ENCODE measurements at regions of chr15 and their contacts with region 1.

Region 1: GRCh38 chr15:54197995-54198394 is 219.8 kb downstream of the UNC13C start:
- DNase-seq: no peak
- ATAC-seq: no peak
- H3K4me3 ChIP-seq: no peak overlapping the region
- H3K27ac ChIP-seq: no peak overlapping the region
- H3K4me1 ChIP-seq: no peaks in the 10 kb centered on the region
- H3K27me3 ChIP-seq: no peaks in the 10 kb centered on the region
- CTCF ChIP-seq: no peak
- EP300 ChIP-seq: no peak
- POLR2A ChIP-seq: no peak
- RAD21 ChIP-seq: no peak

Region 2: GRCh38 chr15:54033869-54034458 is 164.0 kb before region 1 on chr15:
- CTCF ChIA-PET with region 1: no interaction called
- POLR2A ChIA-PET with region 1: no interaction called
- RAD21 ChIA-PET with region 1: no interaction called
- SMC1A ChIA-PET with region 1: no interaction called
- in situ Hi-C with region 1: no loop called
- intact Hi-C with region 1: no loop called
- DNase-seq: no peak
- ATAC-seq: peak; percentile 62
- H3K4me3 ChIP-seq: no peak overlapping the region
- H3K27ac ChIP-seq: no peak overlapping the region
- H3K4me1 ChIP-seq: no peaks in the 10 kb centered on the region
- H3K27me3 ChIP-seq: no peaks in the 10 kb centered on the region
- CTCF ChIP-seq: no peak
- EP300 ChIP-seq: no peak
- POLR2A ChIP-seq: no peak
- RAD21 ChIP-seq: no peak

Region 3: DNA sequence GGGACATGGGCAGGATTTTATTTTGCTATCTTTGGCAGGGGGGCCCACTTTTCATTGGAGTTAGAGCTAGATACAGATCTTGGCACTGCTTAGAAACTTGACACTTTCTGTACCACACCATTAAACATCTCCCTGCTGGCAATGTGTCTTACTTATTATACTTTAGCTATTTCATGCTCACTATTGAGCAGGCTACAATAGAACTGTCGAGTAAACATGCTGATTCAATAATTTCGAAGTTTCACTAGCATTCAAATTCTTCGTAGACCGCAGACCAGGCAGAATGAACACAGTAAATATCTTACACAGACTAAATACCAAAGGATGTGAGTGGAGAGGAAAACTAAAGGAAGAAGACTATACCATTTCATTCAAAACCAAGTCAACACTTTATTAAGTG is 39.0 kb before region 1 on chr15:
- CTCF ChIA-PET with region 1: no interaction called
- POLR2A ChIA-PET with region 1: no interaction called
- RAD21 ChIA-PET with region 1: no interaction called
- SMC1A ChIA-PET with region 1: interaction called, 13 read pairs
- in situ Hi-C with region 1: no loop called
- intact Hi-C with region 1: no loop called
- DNase-seq: no peak
- ATAC-seq: no peak
- H3K4me3 ChIP-seq: no peak overlapping the region
- H3K27ac ChIP-seq: no peak overlapping the region
- H3K4me1 ChIP-seq: no peaks in the 10 kb centered on the region
- H3K27me3 ChIP-seq: no peaks in the 10 kb centered on the region
- CTCF ChIP-seq: no peak
- EP300 ChIP-seq: no peak
- POLR2A ChIP-seq: no peak
- RAD21 ChIP-seq: no peak

Region 4: GRCh38 chr15:54187325-54187724 is 10.7 kb before region 1 on chr15:
- CTCF ChIA-PET with region 1: no interaction called
- POLR2A ChIA-PET with region 1: interaction called, 4 read pairs
- RAD21 ChIA-PET with region 1: no interaction called
- SMC1A ChIA-PET with region 1: interaction called, 10 read pairs
- in situ Hi-C with region 1: no loop called
- intact Hi-C with region 1: no loop called
- DNase-seq: no peak
- ATAC-seq: peak; percentile 75
- H3K4me3 ChIP-seq: no peak overlapping the region
- H3K27ac ChIP-seq: no peak overlapping the region
- H3K4me1 ChIP-seq: no peaks in the 10 kb centered on the region
- H3K27me3 ChIP-seq: no peaks in the 10 kb centered on the region
- CTCF ChIP-seq: no peak
- EP300 ChIP-seq: no peak
- POLR2A ChIP-seq: no peak
- RAD21 ChIP-seq: no peak

Region 5: GRCh38 chr15:54208786-54209185 is 10.8 kb after region 1 on chr15:
- CTCF ChIA-PET with region 1: interaction called, 3 read pairs
- POLR2A ChIA-PET with region 1: interaction called, 4 read pairs
- RAD21 ChIA-PET with region 1: interaction called, 8 read pairs
- SMC1A ChIA-PET with region 1: interaction called, 32 read pairs
- in situ Hi-C with region 1: no loop called
- intact Hi-C with region 1: no loop called
- DNase-seq: no peak
- ATAC-seq: no peak
- H3K4me3 ChIP-seq: no peak overlapping the region
- H3K27ac ChIP-seq: no peak overlapping the region
- H3K4me1 ChIP-seq: no peaks in the 10 kb centered on the region
- H3K27me3 ChIP-seq: no peaks in the 10 kb centered on the region
- CTCF ChIP-seq: no peak
- EP300 ChIP-seq: no peak
- POLR2A ChIP-seq: no peak
- RAD21 ChIP-seq: no peak

Measured in GM12878 (cell line).